ENCODE measurements at regions of chr13 and their contacts with region 1.

Region 1: DNA sequence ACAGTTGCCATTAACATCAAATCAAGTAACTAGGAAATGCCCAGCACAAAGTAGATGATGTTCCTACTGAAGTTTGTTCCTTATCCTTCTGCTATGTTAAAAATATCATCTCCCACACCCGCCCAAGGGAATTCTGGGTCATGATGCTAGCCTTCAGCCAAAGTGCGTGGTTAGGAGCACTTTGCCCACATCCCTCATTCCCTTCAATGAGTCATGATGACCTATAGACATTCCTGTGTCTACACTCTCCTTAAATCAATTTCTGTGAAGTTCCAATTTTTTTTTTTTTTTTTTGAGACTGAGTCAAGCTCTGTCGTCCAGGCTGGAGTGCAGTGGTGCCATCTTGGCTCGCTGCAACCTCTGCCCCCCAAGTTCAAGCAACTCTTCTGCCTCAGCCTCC is 17.0 kb downstream of the RXFP2 start:
- DNase-seq: no peak
- H3K4me3 ChIP-seq: no peak overlapping the region
- H3K27ac ChIP-seq: no peak overlapping the region
- H3K4me1 ChIP-seq: no peaks in the 10 kb centered on the region
- H3K27me3 ChIP-seq: no peaks in the 10 kb centered on the region
- CTCF ChIP-seq: no peak
- EP300 ChIP-seq: no peak
- POLR2A ChIP-seq: no peak

Region 2: DNA sequence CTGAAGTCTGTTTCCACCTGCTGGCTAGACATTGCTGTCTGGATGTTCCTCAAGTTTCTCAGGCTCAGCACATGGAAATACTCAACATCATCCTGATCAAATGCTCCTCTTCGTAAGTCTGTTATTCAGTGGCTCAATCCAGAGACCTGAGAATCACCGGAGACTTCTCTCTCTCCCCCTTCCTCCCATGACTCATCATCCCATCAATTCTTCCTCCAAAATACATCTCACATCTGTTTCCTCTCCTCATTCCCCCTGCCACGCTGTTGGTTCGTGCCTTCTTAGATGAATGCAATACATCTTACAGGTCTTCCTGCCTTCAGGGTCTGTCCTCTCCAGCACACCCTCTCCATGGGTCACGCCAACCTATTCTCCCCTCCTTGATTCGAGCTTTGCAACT is 24.4 kb before region 1 on chr13:
- intact Hi-C with region 1: loop called in 1 of 4 experiments (anchors 2 kb)
- DNase-seq: no peak
- H3K4me3 ChIP-seq: no peak overlapping the region
- H3K27ac ChIP-seq: no peak overlapping the region
- H3K4me1 ChIP-seq: no peaks in the 10 kb centered on the region
- H3K27me3 ChIP-seq: no peaks in the 10 kb centered on the region
- CTCF ChIP-seq: no peak
- EP300 ChIP-seq: no peak
- POLR2A ChIP-seq: no peak